ENCODE measurements at regions of chr15 and their contacts with region 1.

Region 1: GRCh38 chr15:90886041-90886614 is 1.8 kb downstream of the FES start:
- DNase-seq: no peak
- ATAC-seq: peak; percentile 58
- H3K4me3 ChIP-seq: peak overlapping the region in 1 of 3 experiments; percentile 23; a peak in 1 of 6 replicates
- H3K27ac ChIP-seq: no peak overlapping the region
- H3K4me1 ChIP-seq: peaks cover 36% of the 10 kb centered on the region
- H3K27me3 ChIP-seq: peaks cover 0 to 7% of the 10 kb centered on the region in 2 experiments; a peak in 2 of 5 replicates
- CTCF ChIP-seq: peak; percentile 94
- EP300 ChIP-seq: no peak
- POLR2A ChIP-seq: no peak
- RAD21 ChIP-seq: peak; percentile 96

Region 2: DNA sequence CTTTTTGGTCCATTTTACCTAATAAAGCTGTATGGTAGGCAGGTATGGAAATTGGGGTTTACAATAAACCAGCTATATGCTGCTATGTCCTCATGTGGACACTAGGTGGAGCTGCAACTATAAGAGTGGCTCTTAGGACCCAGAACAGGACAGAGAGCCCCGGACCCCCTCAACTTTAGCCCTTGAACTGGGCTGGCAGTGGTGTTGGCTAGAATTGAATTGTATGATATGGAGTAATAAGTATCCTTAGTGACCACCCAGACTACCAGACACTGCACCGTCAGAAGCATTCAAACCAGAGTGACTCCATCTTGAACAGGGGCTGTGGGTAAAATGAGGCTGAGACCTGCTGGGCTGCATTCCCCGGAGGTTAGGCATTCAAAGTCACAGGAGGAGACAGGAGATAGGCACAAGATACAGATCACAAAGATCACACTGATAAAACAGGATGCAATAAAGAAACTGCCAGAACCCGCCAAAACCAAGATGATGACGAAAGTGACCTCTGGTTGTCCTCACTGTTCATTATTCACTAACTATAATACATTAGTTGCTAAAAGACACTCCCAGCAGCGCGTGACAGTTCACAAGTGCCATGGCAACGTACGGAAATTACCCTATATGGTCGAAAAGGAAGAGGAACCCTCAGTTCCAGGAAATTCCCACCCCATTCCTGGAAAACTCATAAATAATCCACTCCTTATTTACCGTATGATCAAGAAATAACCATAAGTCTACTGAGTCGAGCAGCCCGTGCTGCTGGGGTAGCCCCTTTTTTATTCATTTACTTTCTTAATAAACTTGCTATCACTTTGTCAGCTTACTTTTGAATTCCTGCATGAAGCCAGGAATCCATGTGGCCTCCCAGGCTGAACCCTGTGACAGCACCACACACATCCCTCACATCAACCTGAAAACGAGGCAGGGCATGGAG is 237.7 kb before region 1 on chr15:
- CTCF ChIA-PET with region 1: interaction called, 20 read pairs
- POLR2A ChIA-PET with region 1: interaction called, 8 read pairs
- in situ Hi-C with region 1: loop called (anchors 5 kb)
- intact Hi-C with region 1: loop called (anchors 1 kb)
- DNase-seq: peak; percentile 51
- ATAC-seq: peak; percentile 58
- H3K4me3 ChIP-seq: no peak overlapping the region
- H3K27ac ChIP-seq: no peak overlapping the region
- H3K4me1 ChIP-seq: peaks cover 21% of the 10 kb centered on the region
- H3K27me3 ChIP-seq: peaks cover 0 to 2% of the 10 kb centered on the region in 2 experiments; a peak in 2 of 5 replicates
- CTCF ChIP-seq: peak; percentile 82
- EP300 ChIP-seq: no peak
- POLR2A ChIP-seq: no peak
- RAD21 ChIP-seq: peak; percentile 76

Region 3: GRCh38 chr15:90691982-90692773 is 193.9 kb before region 1 on chr15:
- CTCF ChIA-PET with region 1: no interaction called
- POLR2A ChIA-PET with region 1: no interaction called
- in situ Hi-C with region 1: no loop called
- intact Hi-C with region 1: loop called (anchors 1 kb)
- DNase-seq: no peak
- ATAC-seq: no peak
- H3K4me3 ChIP-seq: no peak overlapping the region
- H3K27ac ChIP-seq: no peak overlapping the region
- H3K4me1 ChIP-seq: no peaks in the 10 kb centered on the region
- H3K27me3 ChIP-seq: no peaks in the 10 kb centered on the region
- CTCF ChIP-seq: no peak
- EP300 ChIP-seq: no peak
- POLR2A ChIP-seq: no peak
- RAD21 ChIP-seq: no peak

Region 4: GRCh38 chr15:90716976-90717821 is 168.9 kb before region 1 on chr15 and contains the start of gene BLM:
- CTCF ChIA-PET with region 1: no interaction called
- POLR2A ChIA-PET with region 1: no interaction called
- in situ Hi-C with region 1: no loop called
- intact Hi-C with region 1: no loop called
- DNase-seq: peak; percentile 95
- ATAC-seq: peak; percentile 99
- H3K4me3 ChIP-seq: peak within 1 kb of the TSS; percentile 82 to 97 (median 94)
- H3K27ac ChIP-seq: peak within 1 kb of the TSS; percentile 78
- H3K4me1 ChIP-seq: peaks cover 28% of the 10 kb centered on the region
- H3K27me3 ChIP-seq: no peaks in the 10 kb centered on the region; a peak in 1 of 5 replicates
- CTCF ChIP-seq: peak; percentile 49
- EP300 ChIP-seq: no peak
- POLR2A ChIP-seq: peak; percentile 67 to 85
- RAD21 ChIP-seq: no peak
- total RNA-seq, gene BLM: 11.8 and 17.4 TPM in 2 replicates

Region 5: DNA sequence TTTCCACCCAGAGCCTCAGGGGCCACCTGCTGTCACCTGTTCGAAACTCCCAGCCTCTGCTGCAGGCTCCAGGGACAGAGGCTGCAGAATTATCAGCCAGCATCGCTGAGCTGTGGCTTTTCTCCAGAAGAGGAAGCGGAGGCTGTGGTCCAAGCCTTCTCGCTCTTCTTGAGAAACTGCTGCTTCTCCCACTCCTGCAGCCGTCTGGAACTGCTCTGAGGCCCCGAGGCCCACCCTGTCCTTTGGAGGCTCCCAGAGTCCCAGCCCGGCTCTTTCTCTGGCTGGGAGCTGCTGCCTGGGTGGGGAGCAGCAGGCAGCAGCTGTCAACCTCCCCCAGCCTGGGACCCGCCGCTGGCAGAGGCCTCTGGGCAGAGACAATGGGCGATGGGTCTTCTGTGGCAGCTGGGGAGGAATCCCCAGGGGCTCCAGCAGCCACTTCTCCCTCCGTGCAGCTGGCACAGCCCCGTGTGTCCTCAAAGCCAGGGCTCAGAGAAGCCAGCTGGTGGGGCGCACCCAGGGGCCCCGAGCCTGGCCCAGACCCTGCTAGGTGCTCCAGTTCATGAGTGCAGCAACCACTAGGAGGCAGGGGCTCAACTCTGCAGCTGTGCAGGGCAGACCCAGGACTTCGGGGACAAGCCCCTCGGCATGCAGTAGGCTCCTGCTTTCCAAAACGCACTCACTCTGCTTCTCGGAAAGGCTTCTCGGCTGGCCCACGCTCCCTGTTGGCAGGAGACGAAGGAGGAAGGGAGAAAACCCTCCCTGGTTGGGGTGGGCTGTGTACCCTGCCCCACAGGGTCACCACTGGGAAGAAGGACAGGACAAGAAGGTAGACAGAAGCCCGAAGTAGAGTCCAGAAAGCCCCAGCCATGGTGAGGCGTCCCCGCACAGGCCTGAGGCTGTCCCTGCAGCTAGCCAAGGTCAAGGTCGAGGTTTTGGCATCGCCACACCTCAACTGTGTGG is 67.6 kb before region 1 on chr15:
- CTCF ChIA-PET with region 1: interaction called, 12 read pairs
- POLR2A ChIA-PET with region 1: no interaction called
- in situ Hi-C with region 1: loop called (anchors 5 kb)
- intact Hi-C with region 1: loop called (anchors 1 kb)
- DNase-seq: peak; percentile 22
- ATAC-seq: peak; percentile 86
- H3K4me3 ChIP-seq: no peak overlapping the region
- H3K27ac ChIP-seq: no peak overlapping the region
- H3K4me1 ChIP-seq: peaks cover 16% of the 10 kb centered on the region
- H3K27me3 ChIP-seq: peaks cover 2 to 26% of the 10 kb centered on the region in 2 experiments; a peak in 4 of 5 replicates
- CTCF ChIP-seq: peak; percentile 48
- EP300 ChIP-seq: no peak
- POLR2A ChIP-seq: no peak
- RAD21 ChIP-seq: peak; percentile 43; the same call in 1 of the 2 replicates

Region 6: DNA sequence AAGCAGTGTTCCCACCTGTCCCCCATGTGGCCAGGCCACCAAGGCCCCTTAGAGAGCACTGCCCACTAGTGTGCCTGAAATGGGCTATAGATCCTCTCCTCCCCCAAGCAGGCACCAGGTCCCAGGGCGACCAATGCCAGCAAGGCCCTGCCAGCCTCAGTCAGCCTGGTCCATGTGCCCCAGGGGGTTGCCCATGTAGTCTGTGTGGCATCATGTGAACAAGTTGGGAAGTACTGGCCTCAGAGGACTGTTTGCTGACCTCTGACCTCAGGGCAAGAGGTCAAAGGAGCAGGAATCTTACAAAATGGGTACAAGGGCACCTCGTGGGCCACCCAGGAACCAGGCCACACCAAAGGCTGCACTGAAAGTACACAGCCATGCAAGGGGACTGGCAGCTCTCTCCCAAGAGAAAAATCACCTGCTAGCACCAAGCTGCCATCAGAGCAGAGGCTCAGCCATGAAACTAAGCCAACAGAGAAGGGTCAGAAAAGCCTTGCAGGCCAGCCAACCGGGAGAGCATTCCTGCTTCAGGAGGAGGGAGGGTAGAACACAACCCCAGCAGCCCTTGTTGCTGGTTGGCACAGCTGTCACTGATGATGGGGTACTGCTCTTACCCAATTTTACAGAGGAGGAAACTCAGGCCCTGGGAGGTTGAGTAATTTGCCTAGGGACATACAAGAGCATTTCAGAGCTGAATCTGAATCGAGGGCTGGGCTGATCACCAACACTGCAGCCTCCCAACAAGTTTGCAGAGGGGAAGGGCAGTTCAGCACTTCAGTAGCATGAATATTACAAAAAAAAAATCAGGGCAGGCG is 23.0 kb before region 1 on chr15:
- CTCF ChIA-PET with region 1: interaction called, 13 read pairs
- POLR2A ChIA-PET with region 1: interaction called, 52 read pairs
- in situ Hi-C with region 1: no loop called
- intact Hi-C with region 1: loop called (anchors 1 kb)
- DNase-seq: no peak
- ATAC-seq: no peak
- H3K4me3 ChIP-seq: no peak overlapping the region
- H3K27ac ChIP-seq: no peak overlapping the region
- H3K4me1 ChIP-seq: peaks cover 76% of the 10 kb centered on the region
- H3K27me3 ChIP-seq: peaks cover 0 to 37% of the 10 kb centered on the region in 2 experiments; a peak in 4 of 5 replicates
- CTCF ChIP-seq: no peak
- EP300 ChIP-seq: no peak
- POLR2A ChIP-seq: no peak
- RAD21 ChIP-seq: no peak

Region 7: DNA sequence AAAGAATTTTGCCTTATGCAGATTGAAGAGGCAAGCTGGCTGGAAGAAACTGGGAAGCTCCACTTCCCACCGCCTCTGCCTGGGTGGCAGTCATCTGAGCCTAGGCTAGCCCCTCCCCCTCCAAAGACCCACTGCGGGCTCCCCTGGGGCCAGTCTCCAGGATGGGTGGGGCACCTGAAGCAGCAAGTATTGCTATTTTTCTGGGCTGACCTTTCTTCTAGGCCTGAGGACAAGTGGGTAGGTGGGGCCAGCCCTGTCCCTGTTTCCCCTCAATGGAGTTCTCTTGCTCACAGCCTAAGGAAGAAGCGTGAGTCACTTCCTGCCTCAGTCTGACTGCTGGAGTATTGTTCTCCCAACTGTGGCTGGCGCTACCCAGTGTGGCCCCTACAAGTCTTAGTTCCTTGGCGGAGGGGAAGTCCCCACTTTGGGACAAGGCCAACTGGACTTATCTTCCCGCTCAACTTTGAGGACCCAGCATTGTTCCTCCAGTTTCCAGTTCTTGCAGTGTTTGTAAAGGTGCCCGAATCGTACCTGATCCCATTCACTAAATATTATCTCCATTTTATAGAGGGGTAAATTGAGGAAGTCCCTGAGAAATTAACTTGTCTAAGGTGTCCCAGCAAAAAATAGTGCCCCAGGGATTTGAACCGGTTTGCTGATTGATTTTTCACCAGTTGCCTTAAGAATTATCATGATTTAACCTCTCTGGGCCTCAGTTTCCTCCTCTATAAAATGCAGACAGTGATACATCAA is 16.4 kb before region 1 on chr15:
- CTCF ChIA-PET with region 1: no interaction called
- POLR2A ChIA-PET with region 1: interaction called, 41 read pairs
- in situ Hi-C with region 1: no loop called
- intact Hi-C with region 1: no loop called
- DNase-seq: no peak
- ATAC-seq: no peak
- H3K4me3 ChIP-seq: no peak overlapping the region; a peak in 1 of 6 replicates
- H3K27ac ChIP-seq: no peak overlapping the region
- H3K4me1 ChIP-seq: peaks cover 75% of the 10 kb centered on the region
- H3K27me3 ChIP-seq: peaks cover 0 to 49% of the 10 kb centered on the region in 2 experiments
- CTCF ChIP-seq: no peak
- EP300 ChIP-seq: no peak
- POLR2A ChIP-seq: no peak
- RAD21 ChIP-seq: no peak

Measured in HepG2 (cell line).